ENCODE measurements at regions of chr9 and their contacts with region 1.

Region 1: DNA sequence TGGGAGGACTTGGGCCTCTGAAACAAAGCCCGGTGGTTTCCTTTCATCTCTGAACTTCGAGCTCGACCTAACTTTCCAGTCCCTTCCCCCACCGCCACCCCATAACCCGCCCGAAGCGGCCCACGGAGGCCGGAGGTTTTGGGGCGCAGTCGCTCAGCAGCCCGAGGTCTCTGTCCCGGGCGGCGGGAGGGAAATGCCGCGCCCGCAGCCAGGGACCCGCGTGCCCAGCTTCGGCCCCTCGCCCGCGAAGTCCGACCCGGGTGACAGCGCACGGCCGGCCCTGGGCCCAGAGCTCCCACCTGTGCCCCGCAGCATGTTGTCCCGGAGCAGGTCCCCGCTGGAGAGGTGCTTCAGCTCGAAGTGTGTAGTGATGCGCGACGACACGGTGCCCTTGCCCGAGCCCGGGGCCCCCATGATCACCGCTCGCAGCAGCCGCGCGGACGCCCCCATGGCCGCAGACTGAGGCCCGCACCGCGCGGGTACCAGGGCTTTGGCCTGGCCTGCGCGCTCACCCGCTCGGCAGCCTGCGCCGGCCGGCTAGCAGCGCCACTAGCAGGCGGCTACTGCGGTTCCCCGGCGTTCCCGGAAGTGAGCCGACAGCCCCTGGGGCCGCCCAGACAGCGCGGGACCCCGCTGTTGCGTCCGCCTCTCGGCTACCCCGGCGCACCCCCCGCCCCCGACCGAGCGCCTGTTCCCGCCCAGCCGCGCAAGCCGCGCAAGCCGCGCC is at the start of gene AK3:
- DNase-seq: peak; percentile 61 to 94 (median 80)
- ATAC-seq: peak; percentile 92
- H3K4me3 ChIP-seq: peak within 1 kb of the TSS; percentile 86
- H3K4me3 Mint-ChIP-seq: peak within 1 kb of the TSS; percentile 97
- H3K27ac ChIP-seq: peak within 1 kb of the TSS; percentile 57 to 66
- H3K27ac Mint-ChIP-seq: peak within 1 kb of the TSS; percentile 83
- H3K4me1 ChIP-seq: peaks cover 28% of the 10 kb centered on the region
- H3K4me1 Mint-ChIP-seq: peaks cover 36% of the 10 kb centered on the region
- H3K27me3 ChIP-seq: no peaks in the 10 kb centered on the region
- H3K27me3 Mint-ChIP-seq: no peaks in the 10 kb centered on the region
- CTCF ChIP-seq: no peak
- total RNA-seq, gene AK3: 19.9 to 20.9 TPM

Region 2: GRCh38 chr9:4297151-4297785 is 443.5 kb before region 1 on chr9:
- CTCF ChIA-PET with region 1: no interaction called
- POLR2A ChIA-PET with region 1: interaction called, 10 read pairs
- intact Hi-C with region 1: no loop called
- DNase-seq: peak in 11 of 14 experiments; percentile 9 to 59 (median 29)
- ATAC-seq: peak; percentile 43
- H3K4me3 ChIP-seq: peak overlapping the region; percentile 79
- H3K4me3 Mint-ChIP-seq: peak overlapping the region; percentile 98
- H3K27ac ChIP-seq: peak overlapping the region in 1 of 2 donors; percentile 45
- H3K27ac Mint-ChIP-seq: peak overlapping the region; percentile 52
- H3K4me1 ChIP-seq: peaks cover 24% of the 10 kb centered on the region
- H3K4me1 Mint-ChIP-seq: peaks cover 8% of the 10 kb centered on the region
- H3K27me3 ChIP-seq: peaks cover 7 to 24% of the 10 kb centered on the region in 2 experiments
- H3K27me3 Mint-ChIP-seq: peaks cover 49% of the 10 kb centered on the region
- CTCF ChIP-seq: peak; percentile 20

Region 3: DNA sequence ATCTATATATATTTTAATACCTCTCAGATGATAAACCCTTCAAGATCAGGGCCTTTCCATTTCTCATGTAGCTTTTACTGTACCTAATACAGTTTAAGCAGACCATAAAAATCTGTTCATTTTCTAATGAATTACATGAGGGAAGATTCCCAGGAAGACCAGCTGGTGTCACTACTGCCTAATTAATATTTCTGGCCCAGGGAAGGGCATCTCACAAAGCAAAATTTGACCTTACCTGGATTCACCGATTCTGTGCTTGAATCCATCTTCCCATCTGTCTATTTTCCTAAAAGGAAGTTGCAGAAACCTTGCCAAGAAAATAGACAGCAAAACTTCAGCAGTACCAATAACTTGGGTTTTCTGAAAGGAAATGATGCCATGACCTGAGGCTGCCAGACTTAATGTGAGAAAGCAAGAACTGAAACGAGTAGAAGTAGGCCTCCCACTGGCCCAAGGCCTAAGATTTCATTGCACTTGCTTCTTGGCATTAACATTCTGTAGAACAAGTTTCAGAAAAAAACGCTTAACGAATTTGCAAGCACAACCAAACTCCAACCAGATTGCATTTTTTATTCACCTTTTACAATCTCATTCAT is 358.0 kb before region 1 on chr9:
- CTCF ChIA-PET with region 1: no interaction called
- POLR2A ChIA-PET with region 1: no interaction called
- intact Hi-C with region 1: loop called (anchors 5 to 10 kb)
- DNase-seq: peak in 4 of 14 experiments; percentile 21 to 58 (median 47)
- ATAC-seq: peak; percentile 37
- H3K4me3 ChIP-seq: no peak overlapping the region
- H3K4me3 Mint-ChIP-seq: no peak overlapping the region
- H3K27ac ChIP-seq: no peak overlapping the region
- H3K27ac Mint-ChIP-seq: no peak overlapping the region
- H3K4me1 ChIP-seq: no peaks in the 10 kb centered on the region
- H3K4me1 Mint-ChIP-seq: peaks cover 4% of the 10 kb centered on the region
- H3K27me3 ChIP-seq: no peaks in the 10 kb centered on the region
- H3K27me3 Mint-ChIP-seq: no peaks in the 10 kb centered on the region
- CTCF ChIP-seq: peak; percentile 63

Region 4: DNA sequence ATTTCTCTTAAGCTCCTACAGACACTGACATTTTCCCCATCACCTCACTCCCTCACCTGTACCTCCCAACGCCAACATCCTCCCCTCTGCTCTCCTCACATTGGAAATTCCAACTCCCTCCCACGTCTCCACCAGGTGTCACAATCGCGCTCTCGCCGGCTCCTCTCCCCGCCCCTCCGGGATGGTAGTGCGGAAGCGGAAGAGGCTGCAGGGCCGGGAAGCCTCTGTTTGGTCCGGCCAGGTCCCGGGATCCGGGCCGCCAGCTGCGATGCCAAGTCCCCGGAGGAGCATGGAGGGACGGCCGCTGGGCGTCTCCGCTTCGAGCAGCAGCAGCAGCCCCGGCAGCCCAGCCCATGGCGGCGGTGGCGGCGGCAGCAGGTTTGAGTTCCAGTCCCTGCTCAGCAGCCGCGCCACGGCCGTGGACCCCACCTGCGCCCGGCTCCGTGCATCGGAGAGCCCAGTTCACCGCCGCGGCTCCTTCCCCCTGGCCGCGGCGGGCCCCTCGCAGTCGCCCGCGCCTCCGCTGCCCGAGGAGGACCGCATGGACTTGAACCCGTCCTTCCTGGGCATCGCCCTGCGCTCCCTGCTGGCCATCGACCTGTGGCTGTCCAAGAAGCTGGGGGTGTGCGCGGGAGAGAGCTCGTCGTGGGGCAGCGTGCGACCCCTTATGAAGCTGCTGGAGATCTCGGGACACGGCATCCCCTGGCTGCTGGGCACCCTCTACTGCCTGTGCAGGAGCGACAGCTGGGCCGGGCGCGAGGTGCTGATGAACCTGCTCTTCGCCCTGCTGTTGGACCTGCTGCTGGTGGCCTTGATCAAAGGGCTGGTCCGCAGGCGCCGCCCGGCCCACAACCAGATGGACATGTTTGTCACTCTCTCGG is 78.5 kb before region 1 on chr9 and contains the start of gene PLPP6:
- CTCF ChIA-PET with region 1: interaction called, 3 read pairs
- POLR2A ChIA-PET with region 1: interaction called, 31 read pairs
- intact Hi-C with region 1: loop called (anchors 5 kb)
- DNase-seq: peak; percentile 48 to 91 (median 69)
- ATAC-seq: peak; percentile 75
- H3K4me3 ChIP-seq: peak within 1 kb of the TSS; percentile 81
- H3K4me3 Mint-ChIP-seq: peak within 1 kb of the TSS; percentile 97
- H3K27ac ChIP-seq: peak within 1 kb of the TSS; percentile 70 to 72
- H3K27ac Mint-ChIP-seq: peak within 1 kb of the TSS; percentile 88
- H3K4me1 ChIP-seq: peaks cover 45% of the 10 kb centered on the region
- H3K4me1 Mint-ChIP-seq: peaks cover 58% of the 10 kb centered on the region
- H3K27me3 ChIP-seq: no peaks in the 10 kb centered on the region
- H3K27me3 Mint-ChIP-seq: no peaks in the 10 kb centered on the region
- CTCF ChIP-seq: peak; percentile 66
- total RNA-seq, gene PLPP6: 8.9 to 10.5 TPM

Region 5: GRCh38 chr9:4792572-4793458 is 52.0 kb after region 1 on chr9 and contains the start of gene RCL1:
- CTCF ChIA-PET with region 1: interaction called, 4 read pairs
- POLR2A ChIA-PET with region 1: interaction called, 35 read pairs
- intact Hi-C with region 1: loop called in 1 of 2 experiments (anchors 2 kb)
- DNase-seq: peak; percentile 89 to 98 (median 94)
- ATAC-seq: peak; percentile 89
- H3K4me3 ChIP-seq: peak within 1 kb of the TSS; percentile 87
- H3K4me3 Mint-ChIP-seq: peak within 1 kb of the TSS; percentile 97
- H3K27ac ChIP-seq: peak within 1 kb of the TSS; percentile 83 to 87
- H3K27ac Mint-ChIP-seq: peak within 1 kb of the TSS; percentile 92
- H3K4me1 ChIP-seq: peaks cover 25% of the 10 kb centered on the region
- H3K4me1 Mint-ChIP-seq: peaks cover 45% of the 10 kb centered on the region
- H3K27me3 ChIP-seq: no peaks in the 10 kb centered on the region
- H3K27me3 Mint-ChIP-seq: no peaks in the 10 kb centered on the region
- CTCF ChIP-seq: no peak
- total RNA-seq, gene RCL1: 33.8 to 35.5 TPM